ENCODE measurements at regions of chr11 and their contacts with region 1.

Region 1: GRCh38 chr11:12746593-12747097 is 72.4 kb downstream of the TEAD1 start:
- DNase-seq: peak; percentile 74 to 87 (median 82)
- ATAC-seq: peak; percentile 68 to 83 (median 77)
- H3K4me3 ChIP-seq: no peak overlapping the region
- H3K27ac ChIP-seq: peak overlapping the region in 10 of 12 donors; percentile 9 to 81 (median 53)
- H3K4me1 ChIP-seq: peaks cover 0 to 71% (median 18%) of the 10 kb centered on the region in 12 donors
- H3K27me3 ChIP-seq: no peaks in the 10 kb centered on the region
- CTCF ChIP-seq: no peak
- POLR2A ChIP-seq: no peak

Region 2: GRCh38 chr11:12680246-12680939 is 66.3 kb before region 1 on chr11:
- intact Hi-C with region 1: loop called in 3 of 10 experiments (anchors 2 to 10 kb)
- DNase-seq: peak; percentile 83 to 90 (median 86)
- ATAC-seq: peak; percentile 65 to 95 (median 89)
- H3K4me3 ChIP-seq: peak overlapping the region in 7 of 12 donors; percentile 2 to 31 (median 18)
- H3K27ac ChIP-seq: peak overlapping the region in 10 of 12 donors; percentile 10 to 97 (median 44)
- H3K4me1 ChIP-seq: peaks cover 6 to 78% (median 51%) of the 10 kb centered on the region in 12 donors
- H3K27me3 ChIP-seq: peaks cover 0 to 33% (median 0%) of the 10 kb centered on the region in 9 donors
- CTCF ChIP-seq: no peak
- POLR2A ChIP-seq: no peak

Region 3: GRCh38 chr11:12704049-12704448 is 42.6 kb before region 1 on chr11:
- intact Hi-C with region 1: loop called in 2 of 10 experiments (anchors 5 kb)
- DNase-seq: no peak
- ATAC-seq: no peak
- H3K4me3 ChIP-seq: no peak overlapping the region
- H3K27ac ChIP-seq: peak overlapping the region in 1 of 12 donors; percentile 2
- H3K4me1 ChIP-seq: peaks cover 3 to 72% (median 47%) of the 10 kb centered on the region in 12 donors
- H3K27me3 ChIP-seq: no peaks in the 10 kb centered on the region
- CTCF ChIP-seq: no peak
- POLR2A ChIP-seq: no peak

Region 4: GRCh38 chr11:12787847-12788246 is 41.2 kb after region 1 on chr11:
- intact Hi-C with region 1: loop called in 1 of 10 experiments (anchors 5 kb)
- DNase-seq: no peak
- ATAC-seq: peak in 1 of 4 donors; percentile 19
- H3K4me3 ChIP-seq: no peak overlapping the region
- H3K27ac ChIP-seq: no peak overlapping the region
- H3K4me1 ChIP-seq: peaks cover 0 to 40% (median 5%) of the 10 kb centered on the region in 12 donors
- H3K27me3 ChIP-seq: no peaks in the 10 kb centered on the region
- CTCF ChIP-seq: no peak
- POLR2A ChIP-seq: no peak

Measured in heart left ventricle (tissue), 16 donors.